ENCODE measurements at regions of chr21 and their contacts with region 1.

Region 1: DNA sequence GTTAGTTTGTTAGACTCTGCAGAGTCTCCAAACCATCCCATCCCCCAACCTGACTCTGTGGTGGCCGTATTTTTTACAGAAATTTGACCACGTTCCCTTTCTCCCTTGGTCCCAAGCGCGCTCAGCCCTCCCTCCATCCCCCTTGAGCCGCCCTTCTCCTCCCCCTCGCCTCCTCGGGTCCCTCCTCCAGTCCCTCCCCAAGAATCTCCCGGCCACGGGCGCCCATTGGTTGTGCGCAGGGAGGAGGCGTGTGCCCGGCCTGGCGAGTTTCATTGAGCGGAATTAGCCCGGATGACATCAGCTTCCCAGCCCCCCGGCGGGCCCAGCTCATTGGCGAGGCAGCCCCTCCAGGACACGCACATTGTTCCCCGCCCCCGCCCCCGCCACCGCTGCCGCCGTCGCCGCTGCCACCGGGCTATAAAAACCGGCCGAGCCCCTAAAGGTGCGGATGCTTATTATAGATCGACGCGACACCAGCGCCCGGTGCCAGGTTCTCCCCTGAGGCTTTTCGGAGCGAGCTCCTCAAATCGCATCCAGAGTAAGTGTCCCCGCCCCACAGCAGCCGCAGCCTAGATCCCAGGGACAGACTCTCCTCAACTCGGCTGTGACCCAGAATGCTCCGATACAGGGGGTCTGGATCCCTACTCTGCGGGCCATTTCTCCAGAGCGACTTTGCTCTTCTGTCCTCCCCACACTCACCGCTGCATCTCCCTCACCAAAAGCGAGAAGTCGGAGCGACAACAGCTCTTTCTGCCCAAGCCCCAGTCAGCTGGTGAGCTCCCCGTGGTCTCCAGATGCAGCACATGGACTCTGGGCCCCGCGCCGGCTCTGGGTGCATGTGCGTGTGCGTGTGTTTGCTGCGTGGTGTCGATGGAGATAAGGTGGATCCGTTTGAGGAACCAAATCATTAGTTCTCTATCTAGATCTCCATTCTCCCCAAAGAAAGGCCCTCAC is at the start of gene OLIG2:
- DNase-seq: no peak
- H3K4me3 Mint-ChIP-seq: no peak within 1 kb of the TSS
- H3K27ac Mint-ChIP-seq: peak within 1 kb of the TSS; percentile 70
- H3K4me1 Mint-ChIP-seq: peaks cover 11% of the 10 kb centered on the region
- H3K27me3 Mint-ChIP-seq: peaks cover 76% of the 10 kb centered on the region
- total RNA-seq, gene OLIG2: not detected in 2 replicates

Region 2: DNA sequence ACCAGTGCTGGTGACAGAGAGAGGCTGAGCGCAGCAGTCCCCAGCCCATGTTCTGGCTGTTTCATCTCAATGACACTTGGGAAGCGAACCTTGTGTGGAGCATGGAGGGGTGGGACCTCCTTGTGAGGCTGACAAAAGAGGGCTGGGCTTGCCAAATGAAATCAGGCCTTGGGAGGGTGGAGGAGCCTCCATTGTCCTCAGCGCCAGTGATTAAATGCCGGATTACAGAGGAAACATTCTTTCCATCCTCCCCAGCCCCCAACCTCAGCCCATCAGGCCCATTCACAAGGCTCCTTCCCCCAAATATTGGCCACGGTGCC is 190.9 kb before region 1 on chr21:
- intact Hi-C with region 1: loop called (anchors 10 kb)
- DNase-seq: no peak
- H3K4me3 Mint-ChIP-seq: no peak overlapping the region
- H3K27ac Mint-ChIP-seq: no peak overlapping the region
- H3K4me1 Mint-ChIP-seq: no peaks in the 10 kb centered on the region
- H3K27me3 Mint-ChIP-seq: peaks cover 14% of the 10 kb centered on the region

Region 3: GRCh38 chr21:33069976-33070811 is 44.4 kb after region 1 on chr21 and contains the start of gene OLIG1:
- intact Hi-C with region 1: loop called (anchors 2 kb)
- DNase-seq: no peak
- H3K4me3 Mint-ChIP-seq: peak within 1 kb of the TSS; percentile 67
- H3K27ac Mint-ChIP-seq: no peak within 1 kb of the TSS
- H3K4me1 Mint-ChIP-seq: peaks cover 12% of the 10 kb centered on the region
- H3K27me3 Mint-ChIP-seq: peaks cover 75% of the 10 kb centered on the region
- total RNA-seq, gene OLIG1: not detected in 2 replicates

Measured in activated T-helper 1 cell treated with anti-CD3 and anti-CD28 coated beads, Interleukin-12 subunit alpha, Interleukin-12 subunit beta, Interleukin-2, Interleukin-4 antibody, amounts not matched to agents 30 ng/mL and 10 ng/mL and 1 ng/mL, durations not matched to agents 14 hours and 24 hours and 36 hours (primary cell).